ENCODE measurements at regions of chr4 and their contacts with region 1.

Region 1: DNA sequence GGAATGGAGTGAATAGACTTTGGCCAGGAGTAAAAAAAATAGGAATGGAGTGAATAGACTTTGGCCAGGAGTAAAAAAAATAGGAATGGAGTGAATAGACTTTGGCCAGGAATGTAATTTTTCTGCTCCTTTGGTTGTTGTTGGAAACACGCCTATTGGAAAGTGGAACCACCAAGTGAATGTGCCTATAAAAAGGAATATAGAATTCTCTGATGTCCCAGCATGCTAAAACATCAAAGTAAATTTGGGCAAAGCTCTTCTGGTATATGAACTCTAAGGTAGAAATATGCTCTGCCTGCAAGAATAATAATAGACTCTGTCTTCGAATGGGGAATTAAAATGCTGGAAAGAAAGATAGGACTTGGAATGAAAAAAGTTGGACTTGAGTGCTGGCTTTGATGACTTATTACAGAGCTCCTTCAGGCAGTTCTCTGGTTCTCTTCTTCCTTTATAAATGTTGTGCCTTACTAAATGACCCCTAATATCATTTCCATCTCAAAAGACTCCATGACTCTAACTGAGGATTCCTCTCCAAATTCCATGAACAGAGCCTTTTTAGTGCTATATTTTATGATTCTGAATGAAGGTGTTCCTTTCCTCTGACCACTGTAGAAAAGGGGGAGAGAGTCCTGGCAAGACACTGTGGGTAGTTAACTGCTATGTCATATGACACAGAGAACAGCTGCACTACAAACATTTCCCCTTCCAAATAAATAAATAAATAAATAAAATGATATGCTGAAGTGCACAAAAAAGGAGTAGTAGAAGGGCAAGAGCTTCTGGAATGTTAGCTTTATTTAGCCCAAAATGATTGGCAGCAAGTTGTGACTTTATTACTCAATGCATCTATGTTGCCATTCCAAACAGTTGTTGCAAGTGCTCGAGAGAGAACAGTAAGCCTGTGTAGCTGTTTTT is 13.5 kb upstream of the GBA3 start:
- DNase-seq: no peak
- H3K4me3 ChIP-seq: no peak overlapping the region
- H3K4me1 ChIP-seq: no peaks in the 10 kb centered on the region
- H3K27me3 ChIP-seq: peaks cover 18% of the 10 kb centered on the region

Region 2: DNA sequence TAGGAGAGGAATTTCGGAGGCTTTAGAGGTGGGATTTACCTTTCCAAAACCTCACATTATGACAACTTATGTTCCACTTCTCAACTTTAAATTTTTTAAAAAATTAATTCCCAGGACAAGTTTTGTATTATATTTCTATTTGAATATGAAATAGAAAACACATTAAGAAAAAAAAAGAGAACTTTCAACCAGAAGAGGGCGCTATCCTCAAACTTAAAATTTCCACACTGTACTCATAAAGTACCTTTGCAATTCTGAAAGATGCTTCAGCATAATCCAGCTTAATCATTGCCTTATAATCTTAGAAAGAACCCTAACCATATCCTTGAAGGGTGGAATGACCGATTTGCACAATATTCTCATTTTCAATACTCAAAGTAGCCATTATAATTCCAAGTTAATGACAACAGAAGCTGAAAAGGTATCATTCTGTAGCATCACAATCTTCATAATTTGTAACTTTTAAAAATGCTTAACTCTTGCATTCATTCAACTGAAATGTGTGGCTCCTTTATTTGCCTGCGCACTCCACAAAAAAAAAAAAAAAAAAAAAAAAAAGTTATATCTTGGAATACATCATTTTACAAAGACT is 888.7 kb before region 1 on chr4:
- in situ Hi-C with region 1: loop called (anchors 25 kb)
- DNase-seq: peak in 1 of 2 experiments; percentile 41
- H3K4me3 ChIP-seq: no peak overlapping the region
- H3K4me1 ChIP-seq: no peaks in the 10 kb centered on the region
- H3K27me3 ChIP-seq: no peaks in the 10 kb centered on the region

Region 3: GRCh38 chr4:22398671-22399070 is 280.5 kb before region 1 on chr4:
- in situ Hi-C with region 1: no loop called
- DNase-seq: no peak
- H3K4me3 ChIP-seq: no peak overlapping the region
- H3K4me1 ChIP-seq: no peaks in the 10 kb centered on the region
- H3K27me3 ChIP-seq: no peaks in the 10 kb centered on the region